Thyroid gland (tissue), 4 donors: ENCODE measurements at regions of chr17 and their contacts with region 1.

Region 1: DNA sequence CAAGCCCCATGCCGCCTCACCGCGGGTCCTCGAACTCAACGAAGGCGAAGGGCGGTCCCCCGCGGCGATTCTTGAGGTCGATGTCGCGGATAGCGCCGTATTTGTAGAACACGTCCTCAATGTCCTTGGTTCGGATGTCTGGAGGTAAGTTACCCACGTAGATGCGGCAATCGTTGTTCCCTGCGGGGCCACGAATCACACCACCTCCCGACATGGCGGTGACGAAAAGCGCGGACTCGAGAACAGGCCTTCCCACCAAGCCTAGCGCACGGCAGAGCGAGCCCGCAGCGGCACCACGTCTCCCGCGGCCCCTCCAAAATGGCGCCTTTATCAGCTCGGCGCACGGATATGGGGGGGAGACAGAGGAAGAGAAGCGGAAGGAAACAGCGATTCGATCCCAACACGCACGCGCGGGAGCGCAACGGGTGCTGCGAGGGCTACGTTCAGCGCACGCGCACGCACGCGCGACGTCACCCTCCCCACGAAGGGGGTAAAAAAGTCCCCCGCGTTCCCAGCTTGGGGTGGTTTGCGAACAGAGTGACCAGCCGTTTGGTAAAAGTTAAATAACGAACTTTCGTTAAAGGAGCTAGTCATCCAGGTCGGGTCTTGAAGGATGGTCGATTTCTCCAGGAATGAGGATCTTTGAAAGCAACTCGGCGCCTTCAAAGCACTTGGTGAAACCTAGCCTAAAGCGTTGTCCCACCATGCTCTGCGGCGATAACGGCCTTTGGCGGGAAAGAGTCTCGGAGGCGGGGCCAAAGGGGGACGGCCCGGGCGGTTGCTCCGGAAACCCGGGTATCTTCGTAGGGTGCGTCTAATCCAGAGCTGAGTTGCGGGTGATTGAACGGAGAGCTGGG is at the start of gene SRSF1:
- DNase-seq: peak; percentile 96 to 97
- H3K4me3 ChIP-seq: peak within 1 kb of the TSS; percentile 87 to 100 (median 98)
- H3K27ac ChIP-seq: peak within 1 kb of the TSS; percentile 92 to 99 (median 99)
- H3K4me1 ChIP-seq: peaks cover 17 to 24% of the 10 kb centered on the region in 2 donors
- H3K27me3 ChIP-seq: no peaks in the 10 kb centered on the region
- CTCF ChIP-seq: peak in 1 of 6 experiments; percentile 3
- POLR2A ChIP-seq: peak; percentile 85 to 96
- total RNA-seq, gene SRSF1: 181 to 266 (median 214) TPM

Region 2: DNA sequence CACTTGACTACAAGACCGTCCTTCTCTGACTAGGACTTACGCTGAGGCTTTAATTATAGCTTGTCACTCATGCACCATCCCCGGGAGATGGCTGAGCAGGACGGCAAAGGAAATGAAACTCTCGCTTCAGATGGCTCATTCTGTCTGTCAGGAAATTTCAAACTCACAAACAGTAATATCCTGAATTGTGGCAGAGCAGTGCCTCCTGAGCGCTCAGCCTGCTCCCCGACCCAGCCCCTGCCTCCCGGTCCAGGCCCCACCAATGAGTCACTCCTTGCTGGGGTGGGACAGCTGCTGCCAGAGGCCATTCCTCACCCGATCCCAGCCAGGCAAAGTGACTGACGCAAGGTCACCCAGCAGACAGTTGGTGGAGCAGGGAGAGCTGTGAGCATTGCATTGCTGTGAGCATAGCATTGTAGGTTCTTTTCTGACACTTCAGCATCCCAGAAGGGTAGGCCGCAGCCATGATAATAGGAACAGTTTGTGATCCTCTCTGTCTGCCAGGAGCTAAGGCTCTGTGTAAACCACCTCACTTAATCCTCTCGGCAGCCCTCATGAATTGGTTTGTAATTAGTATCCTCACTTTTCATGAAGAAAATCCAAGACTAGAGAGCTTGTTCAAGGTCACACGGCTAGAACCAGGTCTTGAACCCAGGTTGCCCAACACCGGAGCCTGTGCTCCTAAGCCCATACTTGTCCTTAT is 283.0 kb before region 1 on chr17:
- intact Hi-C with region 1: no loop called
- DNase-seq: no peak
- H3K4me3 ChIP-seq: no peak overlapping the region
- H3K27ac ChIP-seq: no peak overlapping the region
- H3K4me1 ChIP-seq: no peaks in the 10 kb centered on the region
- H3K27me3 ChIP-seq: no peaks in the 10 kb centered on the region
- CTCF ChIP-seq: no peak
- POLR2A ChIP-seq: no peak

Region 3: GRCh38 chr17:58046239-58047094 is 39.3 kb after region 1 on chr17:
- intact Hi-C with region 1: no loop called
- DNase-seq: no peak
- H3K4me3 ChIP-seq: no peak overlapping the region
- H3K27ac ChIP-seq: no peak overlapping the region
- H3K4me1 ChIP-seq: no peaks in the 10 kb centered on the region
- H3K27me3 ChIP-seq: no peaks in the 10 kb centered on the region
- CTCF ChIP-seq: no peak
- POLR2A ChIP-seq: no peak

Region 4: GRCh38 chr17:58082870-58083490 is 75.8 kb after region 1 on chr17 and contains the start of gene DYNLL2:
- intact Hi-C with region 1: loop called (anchors 2 kb)
- DNase-seq: peak; percentile 89 to 90
- H3K4me3 ChIP-seq: peak within 1 kb of the TSS; percentile 44 to 76 (median 68)
- H3K27ac ChIP-seq: peak within 1 kb of the TSS; percentile 94 to 96 (median 94)
- H3K4me1 ChIP-seq: peaks cover 39 to 43% of the 10 kb centered on the region in 2 donors
- H3K27me3 ChIP-seq: no peaks in the 10 kb centered on the region
- CTCF ChIP-seq: no peak
- POLR2A ChIP-seq: no peak
- total RNA-seq, gene DYNLL2: 35.6 to 51.0 (median 41.2) TPM

Region 5: DNA sequence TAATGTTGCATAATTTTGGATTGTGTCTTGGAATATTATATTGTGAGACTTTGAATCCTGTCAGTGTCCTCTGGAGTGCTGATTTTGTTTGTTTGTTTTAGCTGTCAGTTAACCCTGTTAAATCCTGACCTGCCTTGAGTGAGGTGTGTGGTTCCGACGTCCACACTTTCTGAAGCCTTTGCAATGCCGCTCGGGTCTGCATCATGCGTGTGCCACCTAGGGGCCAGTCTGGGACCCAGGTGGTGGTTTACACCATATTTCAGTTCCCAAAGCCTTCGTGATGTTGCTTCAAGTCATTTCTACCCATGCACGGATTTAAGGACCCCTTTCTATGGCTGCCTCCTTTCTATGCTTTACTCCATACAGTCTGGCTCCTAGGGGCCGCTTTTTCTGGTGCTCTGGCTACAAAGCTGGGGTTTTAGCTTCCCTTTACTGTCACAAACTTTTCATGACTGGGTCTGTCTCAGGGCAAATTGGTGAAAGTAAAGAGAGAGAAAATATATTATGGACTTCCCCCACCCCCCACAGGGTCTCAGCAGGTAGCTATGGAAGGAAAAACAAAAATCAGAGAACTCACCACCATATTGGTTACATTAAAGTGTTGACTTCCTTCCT is 129.6 kb after region 1 on chr17:
- intact Hi-C with region 1: no loop called
- DNase-seq: peak; percentile 5 to 17
- H3K4me3 ChIP-seq: no peak overlapping the region
- H3K27ac ChIP-seq: no peak overlapping the region
- H3K4me1 ChIP-seq: no peaks in the 10 kb centered on the region
- H3K27me3 ChIP-seq: no peaks in the 10 kb centered on the region
- CTCF ChIP-seq: peak in 2 of 6 experiments; percentile 24 to 45
- POLR2A ChIP-seq: no peak